PC-9 (cell line): ENCODE measurements at regions of chr3 and their contacts with region 1.

Region 1: GRCh38 chr3:184777336-184778004 is 34.5 kb upstream of the VPS8 start:
- DNase-seq: peak; percentile 88 to 92
- H3K4me3 ChIP-seq: no peak overlapping the region
- H3K27ac ChIP-seq: no peak overlapping the region
- H3K4me1 ChIP-seq: no peaks in the 10 kb centered on the region
- H3K27me3 ChIP-seq: peaks cover 18% of the 10 kb centered on the region
- CTCF ChIP-seq: peak; percentile 98

Region 2: GRCh38 chr3:184417619-184418327 is 359.7 kb before region 1 on chr3:
- CTCF ChIA-PET with region 1: no interaction called
- POLR2A ChIA-PET with region 1: no interaction called
- intact Hi-C with region 1: loop called (anchors 5 kb)
- DNase-seq: peak; percentile 57 to 75
- H3K4me3 ChIP-seq: no peak overlapping the region
- H3K27ac ChIP-seq: no peak overlapping the region
- H3K4me1 ChIP-seq: no peaks in the 10 kb centered on the region
- H3K27me3 ChIP-seq: peaks cover 11% of the 10 kb centered on the region; the same call in 1 of the 2 replicates
- CTCF ChIP-seq: peak; percentile 98

Region 3: GRCh38 chr3:184727357-184728009 is 50.0 kb before region 1 on chr3:
- CTCF ChIA-PET with region 1: no interaction called
- POLR2A ChIA-PET with region 1: no interaction called
- intact Hi-C with region 1: loop called (anchors 1 kb)
- DNase-seq: peak; percentile 76 to 82
- H3K4me3 ChIP-seq: no peak overlapping the region
- H3K27ac ChIP-seq: no peak overlapping the region
- H3K4me1 ChIP-seq: peaks cover 10% of the 10 kb centered on the region
- H3K27me3 ChIP-seq: no peaks in the 10 kb centered on the region
- CTCF ChIP-seq: peak; percentile 91

Region 4: GRCh38 chr3:184748219-184749135 is 29.0 kb before region 1 on chr3:
- CTCF ChIA-PET with region 1: no interaction called
- POLR2A ChIA-PET with region 1: no interaction called
- intact Hi-C with region 1: loop called (anchors 1 kb)
- DNase-seq: peak; percentile 41 to 55
- H3K4me3 ChIP-seq: no peak overlapping the region
- H3K27ac ChIP-seq: no peak overlapping the region
- H3K4me1 ChIP-seq: peaks cover 7% of the 10 kb centered on the region
- H3K27me3 ChIP-seq: no peaks in the 10 kb centered on the region
- CTCF ChIP-seq: peak; percentile 73